ENCODE measurements at regions of chr4 and their contacts with region 1.

Region 1: GRCh38 chr4:99808260-99808857 is 8.3 kb upstream of the DAPP1 start:
- DNase-seq: peak; percentile 47
- H3K4me3 ChIP-seq: no peak overlapping the region
- H3K27ac ChIP-seq: no peak overlapping the region
- H3K4me1 ChIP-seq: no peaks in the 10 kb centered on the region
- H3K27me3 ChIP-seq: no peaks in the 10 kb centered on the region
- CTCF ChIP-seq: peak; percentile 40 to 46
- POLR2A ChIP-seq: no peak

Region 2: DNA sequence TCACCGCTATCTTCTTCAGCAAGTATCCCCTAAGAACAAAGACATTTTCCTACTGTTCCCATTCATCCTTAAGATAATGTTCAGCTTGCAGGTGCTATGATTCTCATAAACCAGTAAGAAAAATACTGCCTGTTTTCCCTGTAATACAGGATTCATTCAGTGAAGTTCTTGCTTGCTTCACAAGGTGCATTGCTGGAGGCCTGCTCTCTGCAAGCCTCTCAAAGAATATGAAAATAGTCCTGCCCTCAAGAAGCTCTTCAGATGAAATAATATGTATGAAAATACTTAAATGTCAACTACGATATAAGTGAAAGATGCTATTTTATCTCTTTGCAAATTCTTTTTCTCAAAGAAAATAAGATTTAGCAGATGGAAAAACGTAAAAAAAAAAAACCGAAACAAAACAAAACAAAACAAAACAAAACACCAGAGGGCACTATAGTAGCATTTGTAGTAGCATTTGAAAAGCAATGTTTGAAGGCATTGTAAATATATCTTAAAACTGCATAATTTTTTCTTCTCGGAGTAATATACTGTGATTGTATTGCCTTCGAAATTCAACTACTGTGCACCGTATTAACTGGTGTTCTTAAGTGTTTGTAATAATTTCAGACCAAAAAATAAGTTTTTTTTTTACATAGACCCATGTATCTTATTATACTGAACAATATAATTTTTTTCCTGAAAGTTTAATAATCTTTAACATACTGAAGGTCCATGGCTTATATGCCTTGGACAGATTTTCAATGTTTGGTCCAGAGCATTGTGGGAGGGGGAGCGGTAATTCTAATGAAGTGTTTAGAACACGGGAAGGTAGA is 690.3 kb before region 1 on chr4:
- CTCF ChIA-PET with region 1: no interaction called
- POLR2A ChIA-PET with region 1: no interaction called
- dilution Hi-C with region 1: no loop called
- intact Hi-C with region 1: loop called (anchors 2 kb)
- DNase-seq: peak; percentile 18
- H3K4me3 ChIP-seq: no peak overlapping the region
- H3K27ac ChIP-seq: no peak overlapping the region
- H3K4me1 ChIP-seq: no peaks in the 10 kb centered on the region
- H3K27me3 ChIP-seq: peaks cover 0 to 2% of the 10 kb centered on the region in 2 experiments
- CTCF ChIP-seq: no peak
- POLR2A ChIP-seq: no peak

Region 3: GRCh38 chr4:99529228-99529627 is 279.1 kb before region 1 on chr4:
- CTCF ChIA-PET with region 1: no interaction called
- POLR2A ChIA-PET with region 1: no interaction called
- dilution Hi-C with region 1: no loop called
- intact Hi-C with region 1: no loop called
- DNase-seq: no peak
- H3K4me3 ChIP-seq: no peak overlapping the region
- H3K27ac ChIP-seq: no peak overlapping the region
- H3K4me1 ChIP-seq: no peaks in the 10 kb centered on the region
- H3K27me3 ChIP-seq: peaks cover 0 to 2% of the 10 kb centered on the region in 2 experiments
- CTCF ChIP-seq: no peak
- POLR2A ChIP-seq: no peak

Region 4: GRCh38 chr4:99783940-99784339 is 24.4 kb before region 1 on chr4:
- CTCF ChIA-PET with region 1: no interaction called
- POLR2A ChIA-PET with region 1: no interaction called
- dilution Hi-C with region 1: no loop called
- intact Hi-C with region 1: no loop called
- DNase-seq: no peak
- H3K4me3 ChIP-seq: no peak overlapping the region
- H3K27ac ChIP-seq: no peak overlapping the region
- H3K4me1 ChIP-seq: no peaks in the 10 kb centered on the region
- H3K27me3 ChIP-seq: no peaks in the 10 kb centered on the region
- CTCF ChIP-seq: no peak
- POLR2A ChIP-seq: no peak

Region 5: DNA sequence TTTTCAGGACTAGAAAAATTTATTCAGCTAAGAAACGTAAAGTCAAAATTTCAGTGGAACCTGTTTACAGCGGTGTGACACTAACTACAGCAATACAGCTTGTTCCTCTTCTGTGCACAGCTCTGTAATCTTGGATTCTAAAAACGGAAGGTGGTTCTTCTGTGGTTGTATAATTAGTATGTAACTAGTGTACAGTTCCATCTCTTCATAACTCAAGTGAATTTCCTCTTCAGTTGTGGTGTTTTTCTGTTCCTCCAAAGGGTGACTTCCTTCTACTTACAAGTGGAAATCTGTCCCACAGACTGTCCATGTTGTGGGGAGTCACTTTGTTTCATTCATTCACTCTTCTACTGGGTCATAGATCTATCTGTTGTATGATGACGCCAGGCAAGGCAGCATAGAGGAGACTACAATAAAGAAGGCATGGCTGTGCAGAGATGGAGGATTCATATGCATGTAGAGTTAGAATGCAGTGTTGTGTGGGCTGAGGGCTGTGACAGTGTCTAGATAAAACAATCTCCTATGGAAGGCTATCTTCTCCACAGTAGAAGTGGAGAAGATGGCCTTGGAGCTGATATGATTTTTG is 13.7 kb after region 1 on chr4:
- CTCF ChIA-PET with region 1: interaction called, 14 read pairs
- POLR2A ChIA-PET with region 1: no interaction called
- dilution Hi-C with region 1: no loop called
- intact Hi-C with region 1: no loop called
- DNase-seq: no peak
- H3K4me3 ChIP-seq: no peak overlapping the region
- H3K27ac ChIP-seq: no peak overlapping the region
- H3K4me1 ChIP-seq: no peaks in the 10 kb centered on the region
- H3K27me3 ChIP-seq: peaks cover 0 to 2% of the 10 kb centered on the region in 2 experiments
- CTCF ChIP-seq: no peak
- POLR2A ChIP-seq: no peak

Region 6: DNA sequence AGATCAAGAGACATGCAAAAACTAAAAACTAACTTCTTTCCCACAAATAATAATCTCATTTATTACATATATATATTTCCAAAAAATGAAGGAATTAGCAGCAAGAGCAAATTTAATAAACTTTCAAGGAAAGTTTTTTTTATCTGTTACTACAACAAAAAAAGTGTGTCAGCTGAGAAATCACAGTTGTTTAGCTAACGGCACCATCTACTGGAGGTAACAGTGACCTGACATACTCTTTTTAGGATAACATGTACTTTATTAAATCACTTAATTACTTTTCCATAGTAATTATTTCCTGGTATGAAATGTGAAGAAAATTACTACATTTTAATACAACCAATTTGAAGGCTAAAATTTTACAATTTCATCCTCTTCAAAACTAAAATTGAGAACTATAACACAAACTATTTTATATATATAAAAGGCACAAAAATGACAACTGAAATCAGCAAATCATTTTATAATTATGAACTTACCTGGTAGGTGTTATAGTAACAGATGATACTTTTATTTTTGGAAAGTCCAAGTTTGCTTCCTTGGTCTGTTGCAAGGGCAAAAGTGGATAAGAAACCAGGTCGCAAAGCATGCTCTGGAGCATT is 76.8 kb after region 1 on chr4:
- CTCF ChIA-PET with region 1: interaction called, 12 read pairs
- POLR2A ChIA-PET with region 1: no interaction called
- dilution Hi-C with region 1: no loop called
- intact Hi-C with region 1: loop called (anchors 2 kb)
- DNase-seq: peak; percentile 33
- H3K4me3 ChIP-seq: no peak overlapping the region
- H3K27ac ChIP-seq: no peak overlapping the region
- H3K4me1 ChIP-seq: no peaks in the 10 kb centered on the region
- H3K27me3 ChIP-seq: no peaks in the 10 kb centered on the region
- CTCF ChIP-seq: peak in 1 of 2 donors; percentile 20
- POLR2A ChIP-seq: no peak

Region 7: DNA sequence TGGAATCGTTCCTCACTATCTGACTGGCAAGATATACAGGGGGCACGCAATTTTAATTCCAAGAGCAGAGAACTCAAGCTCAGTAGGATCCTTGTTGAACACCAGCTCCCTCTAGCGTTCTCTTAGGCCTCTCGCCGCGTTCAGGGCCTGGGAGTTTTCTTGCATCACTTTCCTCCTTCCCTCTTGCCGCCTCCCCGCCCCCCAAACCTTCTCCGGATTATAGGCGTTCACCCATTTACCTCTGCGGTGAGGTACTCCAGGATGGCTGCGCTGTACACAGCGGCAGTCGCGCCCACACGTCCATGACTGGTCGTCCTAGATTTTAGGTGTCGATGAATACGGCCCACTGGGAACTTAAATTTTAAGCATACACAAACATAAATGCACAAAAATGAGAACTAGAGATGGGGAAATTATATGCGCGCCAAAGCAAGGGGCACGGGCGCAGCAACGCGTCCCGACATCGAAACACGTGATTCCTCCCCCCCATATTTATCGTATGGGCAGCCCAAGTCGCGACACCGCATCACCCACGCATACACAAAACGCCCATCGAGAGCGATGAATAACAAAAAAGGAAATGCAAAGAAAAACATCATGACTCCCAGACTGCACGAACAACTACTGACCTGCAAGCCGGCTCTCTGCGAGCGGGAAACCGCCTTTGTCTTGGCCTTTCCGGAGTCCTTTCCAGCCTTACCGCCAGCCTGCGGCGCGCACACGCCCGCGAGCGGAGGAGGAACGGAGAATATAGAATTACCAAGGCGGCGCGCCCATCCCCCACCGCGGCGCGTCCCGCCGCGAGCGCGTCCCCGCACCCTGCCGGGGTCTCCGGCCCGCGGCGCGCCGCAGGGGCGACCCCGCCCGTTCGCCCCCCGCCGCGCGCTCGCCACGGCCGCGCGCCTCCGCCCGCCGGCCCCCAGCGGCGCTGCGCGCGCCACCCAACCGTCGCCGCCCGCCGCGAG is 141.0 kb after region 1 on chr4:
- CTCF ChIA-PET with region 1: interaction called, 55 read pairs
- POLR2A ChIA-PET with region 1: interaction called, 3 read pairs
- dilution Hi-C with region 1: no loop called
- intact Hi-C with region 1: loop called (anchors 1 kb)
- DNase-seq: peak; percentile 91
- H3K4me3 ChIP-seq: peak overlapping the region; percentile 66 to 87 (median 86)
- H3K27ac ChIP-seq: peak overlapping the region; percentile 75
- H3K4me1 ChIP-seq: peaks cover 38% of the 10 kb centered on the region
- H3K27me3 ChIP-seq: no peaks in the 10 kb centered on the region
- CTCF ChIP-seq: peak; percentile 83 to 91
- POLR2A ChIP-seq: no peak

Region 8: DNA sequence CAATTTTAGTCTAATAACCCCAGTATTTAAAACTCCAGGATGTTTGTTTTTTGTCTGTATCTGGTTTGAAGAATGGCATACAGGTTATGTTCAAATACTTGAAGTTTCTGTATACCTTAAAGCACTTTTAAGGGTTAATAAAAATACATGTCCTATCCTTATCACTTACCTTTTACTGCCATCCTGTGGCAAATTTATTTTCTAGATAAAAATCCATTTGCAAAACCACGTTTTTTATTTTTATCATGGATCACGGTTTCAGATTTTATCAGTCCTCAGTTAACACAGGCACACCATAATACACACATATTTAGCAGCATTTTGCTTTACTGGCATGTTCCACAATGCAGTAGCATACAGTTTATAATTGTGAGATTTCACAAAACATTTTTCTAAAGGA is 255.0 kb after region 1 on chr4:
- CTCF ChIA-PET with region 1: no interaction called
- POLR2A ChIA-PET with region 1: no interaction called
- dilution Hi-C with region 1: no loop called
- intact Hi-C with region 1: loop called (anchors 2 kb)
- DNase-seq: no peak
- H3K4me3 ChIP-seq: no peak overlapping the region
- H3K27ac ChIP-seq: no peak overlapping the region
- H3K4me1 ChIP-seq: no peaks in the 10 kb centered on the region
- H3K27me3 ChIP-seq: no peaks in the 10 kb centered on the region
- CTCF ChIP-seq: no peak
- POLR2A ChIP-seq: no peak